AG04449 (cell line): ENCODE measurements at regions of chr22 and their contacts with region 1.

Region 1: DNA sequence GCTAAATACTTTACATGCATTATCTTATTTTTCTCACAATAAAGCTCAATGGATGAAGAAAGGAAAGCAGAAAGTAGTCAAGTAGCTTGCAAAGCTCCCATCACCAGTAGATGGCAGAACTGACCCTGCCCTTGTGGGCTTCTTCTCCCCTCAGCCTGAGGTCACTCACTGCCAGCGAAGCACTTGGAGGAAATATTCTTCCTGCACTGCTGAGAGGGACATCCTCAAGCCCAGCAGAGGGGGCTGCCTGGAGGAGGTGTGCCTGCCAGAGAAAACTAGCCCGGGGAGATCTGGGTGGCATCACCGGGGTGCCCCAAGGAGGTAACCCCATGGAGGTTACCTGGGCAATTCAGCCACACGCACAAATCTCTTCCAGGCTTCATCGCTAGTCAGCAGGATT is 6.6 kb downstream of the APOL4 start:
- DNase-seq: no peak
- H3K4me3 ChIP-seq: no peak overlapping the region
- CTCF ChIP-seq: peak; percentile 65

Region 2: DNA sequence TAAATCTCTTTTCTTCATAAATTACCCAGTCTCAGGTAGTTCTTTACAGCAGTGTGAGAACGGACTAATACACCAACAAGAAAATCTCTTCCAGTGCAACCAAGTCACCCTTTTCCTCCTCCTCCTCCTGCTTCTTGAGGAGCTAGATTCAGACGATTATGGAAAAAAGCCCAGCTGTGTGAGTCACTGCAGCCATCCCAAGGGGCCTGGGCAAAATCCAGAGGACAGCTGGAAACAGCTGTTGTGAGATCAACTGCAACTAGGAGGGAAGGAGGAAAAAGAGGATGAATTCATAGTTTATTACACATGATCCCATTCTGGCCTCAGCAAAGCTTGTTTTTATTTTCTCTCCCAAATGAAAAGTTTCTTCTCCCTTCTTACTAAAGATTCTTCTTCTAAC is 199.2 kb before region 1 on chr22:
- CTCF ChIA-PET with region 1: no interaction called
- POLR2A ChIA-PET with region 1: no interaction called
- DNase-seq: peak; percentile 84
- H3K4me3 ChIP-seq: no peak overlapping the region
- CTCF ChIP-seq: no peak

Region 3: GRCh38 chr22:36065775-36066559 is 129.0 kb before region 1 on chr22:
- CTCF ChIA-PET with region 1: no interaction called
- POLR2A ChIA-PET with region 1: no interaction called
- DNase-seq: peak; percentile 73
- H3K4me3 ChIP-seq: peak overlapping the region; percentile 62
- CTCF ChIP-seq: peak; percentile 84

Region 4: DNA sequence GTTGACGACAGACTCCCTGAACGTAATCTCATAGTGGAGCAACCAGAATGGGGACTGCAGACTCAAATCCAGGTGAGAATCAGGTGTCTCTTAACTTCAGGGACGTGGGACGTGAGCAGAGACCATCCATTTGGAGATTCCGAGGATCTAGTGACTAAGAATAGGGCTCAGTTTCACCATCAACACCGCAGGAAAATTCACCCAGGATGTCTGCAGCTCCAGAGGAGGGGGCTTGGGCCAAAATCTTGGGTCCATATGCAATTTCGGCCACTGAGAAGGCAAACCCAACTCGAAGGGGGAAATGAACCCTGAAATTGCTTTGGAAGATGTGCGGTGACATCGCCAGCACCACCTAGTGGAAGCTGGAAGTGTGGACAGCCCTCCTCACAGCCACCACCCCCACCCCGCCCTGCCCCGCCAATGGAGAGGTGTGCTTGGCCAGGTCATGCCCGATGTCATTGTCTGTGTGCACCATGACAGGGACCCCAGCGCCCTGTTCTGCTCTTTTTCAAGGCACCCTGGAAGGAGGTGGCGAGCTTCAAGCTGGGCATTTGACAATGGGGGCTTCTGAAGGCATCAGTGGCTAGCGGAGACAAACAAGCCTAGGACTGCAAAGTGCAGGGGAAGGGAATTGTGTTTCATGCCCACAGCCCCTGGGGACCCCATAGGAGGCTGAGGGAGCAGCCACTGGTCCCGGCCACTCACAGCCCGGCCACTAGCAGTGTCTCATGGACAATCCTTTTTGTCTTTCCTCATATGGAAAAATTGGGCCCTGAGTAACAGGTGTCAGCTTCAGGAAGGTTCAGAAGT is 82.7 kb after region 1 on chr22:
- CTCF ChIA-PET with region 1: interaction called, 24 read pairs
- POLR2A ChIA-PET with region 1: no interaction called
- DNase-seq: no peak
- H3K4me3 ChIP-seq: no peak overlapping the region
- CTCF ChIP-seq: peak; percentile 75